ENCODE measurements at regions of chrX and their contacts with region 1.

Region 1: GRCh38 chrX:30889147-30890140 is at the start of gene TAB3:
- DNase-seq: peak; percentile 91
- H3K4me3 Mint-ChIP-seq: peak within 1 kb of the TSS; percentile 90
- H3K27ac Mint-ChIP-seq: peak within 1 kb of the TSS; percentile 96
- H3K4me1 Mint-ChIP-seq: peaks cover 32% of the 10 kb centered on the region
- H3K27me3 Mint-ChIP-seq: no peaks in the 10 kb centered on the region
- total RNA-seq, gene TAB3: 23.7 and 24.4 TPM in 2 replicates

Region 2: DNA sequence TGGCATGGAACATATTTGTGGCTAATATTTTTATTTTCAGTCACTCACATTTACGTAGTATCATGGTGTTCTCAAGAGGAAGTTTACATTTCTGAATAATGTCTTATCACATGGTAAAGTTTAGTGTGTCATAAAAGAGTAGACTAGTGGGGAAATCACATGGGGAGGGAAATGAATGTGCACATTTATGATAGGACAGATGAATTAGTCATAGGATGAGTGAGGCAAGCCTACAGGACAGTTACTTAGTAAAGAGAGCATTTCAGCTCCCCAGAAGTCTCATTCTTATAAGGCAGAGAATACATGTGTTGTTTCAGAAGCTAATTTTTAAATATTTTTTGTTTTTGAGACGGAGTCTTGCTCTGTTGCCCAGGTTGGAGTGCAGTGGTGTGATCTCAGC is 230.0 kb before region 1 on chrX:
- intact Hi-C with region 1: loop called (anchors 2 kb)
- DNase-seq: no peak
- H3K4me3 Mint-ChIP-seq: peak overlapping the region; percentile 25
- H3K27ac Mint-ChIP-seq: peak overlapping the region; percentile 69
- H3K4me1 Mint-ChIP-seq: peaks cover 48% of the 10 kb centered on the region
- H3K27me3 Mint-ChIP-seq: no peaks in the 10 kb centered on the region

Region 3: GRCh38 chrX:30831082-30831481 is 58.4 kb before region 1 on chrX:
- intact Hi-C with region 1: loop called (anchors 1 kb)
- DNase-seq: peak; percentile 37
- H3K4me3 Mint-ChIP-seq: peak overlapping the region; percentile 60
- H3K27ac Mint-ChIP-seq: peak overlapping the region; percentile 67
- H3K4me1 Mint-ChIP-seq: peaks cover 26% of the 10 kb centered on the region
- H3K27me3 Mint-ChIP-seq: peaks cover 1% of the 10 kb centered on the region

Region 4: GRCh38 chrX:31061091-31061490 is 171.6 kb after region 1 on chrX:
- intact Hi-C with region 1: loop called (anchors 1 kb)
- DNase-seq: no peak
- H3K4me3 Mint-ChIP-seq: no peak overlapping the region
- H3K27ac Mint-ChIP-seq: no peak overlapping the region
- H3K4me1 Mint-ChIP-seq: peaks cover 23% of the 10 kb centered on the region
- H3K27me3 Mint-ChIP-seq: no peaks in the 10 kb centered on the region

Measured in activated T-helper 1 cell treated with anti-CD3 and anti-CD28 coated beads, Interleukin-12 subunit alpha, Interleukin-12 subunit beta, Interleukin-2, Interleukin-4 antibody, amounts not matched to agents 30 ng/mL and 10 ng/mL and 1 ng/mL, durations not matched to agents 14 hours and 24 hours and 36 hours (primary cell).